ENCODE measurements at regions of chr12 and their contacts with region 1.

Region 1: GRCh38 chr12:62848421-62848820 is 86.5 kb downstream of the PPM1H start:
- DNase-seq: peak; percentile 43
- H3K4me3 Mint-ChIP-seq: peak overlapping the region; percentile 17
- H3K27ac Mint-ChIP-seq: peak overlapping the region; percentile 82
- H3K4me1 Mint-ChIP-seq: peaks cover 44% of the 10 kb centered on the region
- H3K27me3 Mint-ChIP-seq: no peaks in the 10 kb centered on the region
- CTCF ChIP-seq: no peak

Region 2: DNA sequence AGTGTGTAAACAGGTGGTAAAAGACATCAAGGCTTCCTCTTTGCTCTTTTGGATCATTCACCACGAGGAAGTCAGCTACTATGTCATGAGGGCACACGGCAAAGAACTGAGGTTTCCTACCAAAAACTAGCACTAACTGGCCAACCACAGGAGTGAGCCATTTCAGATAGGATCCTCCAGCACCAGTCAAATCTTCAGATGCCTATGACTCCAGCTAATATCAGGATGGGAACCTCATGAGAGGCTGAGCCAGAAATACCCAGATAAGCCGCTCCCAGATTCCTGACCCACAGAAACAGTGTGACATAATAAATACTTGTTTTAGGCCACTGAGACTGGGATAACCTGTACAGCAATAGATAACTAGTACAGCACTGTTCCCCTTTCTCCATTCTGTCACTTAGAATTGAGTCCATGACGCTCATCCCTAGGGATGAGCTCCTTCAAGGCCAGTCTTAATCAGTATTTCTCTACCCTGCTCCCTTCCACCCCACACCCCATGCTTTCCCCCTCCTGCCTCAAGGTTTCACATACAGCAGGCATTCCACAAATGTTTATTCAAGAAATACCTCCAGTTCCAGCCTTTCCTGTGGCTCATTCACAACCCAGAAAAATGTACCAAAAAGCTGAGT is 18.1 kb after region 1 on chr12:
- CTCF ChIA-PET with region 1: interaction called, 10 read pairs
- intact Hi-C with region 1: loop called (anchors 2 kb)
- DNase-seq: peak; percentile 59
- H3K4me3 Mint-ChIP-seq: peak overlapping the region; percentile 22
- H3K27ac Mint-ChIP-seq: peak overlapping the region; percentile 57
- H3K4me1 Mint-ChIP-seq: peaks cover 61% of the 10 kb centered on the region
- H3K27me3 Mint-ChIP-seq: no peaks in the 10 kb centered on the region
- CTCF ChIP-seq: no peak

Region 3: DNA sequence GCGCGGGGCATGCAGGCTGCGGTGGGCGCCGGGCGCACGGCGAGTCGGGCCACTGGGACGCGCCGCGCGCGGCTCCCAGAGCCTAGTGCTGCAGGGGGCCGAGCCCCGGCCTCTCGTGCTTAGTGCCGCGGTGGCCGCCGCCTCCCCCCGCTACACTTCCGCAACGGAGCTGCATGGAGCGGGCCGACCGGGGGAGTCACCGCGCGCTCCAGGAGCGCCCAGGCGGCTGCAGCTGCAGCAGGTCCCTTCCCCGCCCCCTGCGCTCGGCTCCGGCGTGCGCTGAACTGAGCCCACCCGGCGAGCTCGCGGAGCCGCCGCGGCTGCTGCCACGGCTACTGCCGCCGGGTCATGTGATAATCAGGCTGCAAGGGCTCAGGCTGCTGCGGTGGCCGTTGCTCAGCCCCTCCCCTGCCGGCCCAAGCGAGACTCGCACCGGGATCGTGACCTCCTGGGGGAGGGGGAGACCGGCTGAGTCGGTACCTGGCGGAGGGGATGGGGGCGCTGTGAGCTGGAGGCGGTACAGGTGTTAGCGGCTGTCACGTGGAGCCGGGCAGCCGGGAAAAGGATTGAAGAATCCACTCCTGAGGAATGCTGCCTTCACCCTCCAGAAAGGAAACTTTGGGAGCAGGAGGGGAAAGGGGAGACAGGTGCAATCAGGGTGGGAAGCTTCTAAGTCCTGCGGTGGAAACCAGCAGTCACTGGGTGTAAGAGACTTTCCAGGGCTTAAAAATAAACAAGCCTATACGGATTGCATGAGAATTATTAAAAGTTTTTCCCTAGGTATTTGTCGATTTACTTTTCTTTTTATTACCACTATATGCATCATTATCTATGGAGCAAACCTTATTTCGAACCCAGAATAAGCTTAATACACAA is 86.6 kb after region 1 on chr12 and contains the start of gene PPM1H:
- CTCF ChIA-PET with region 1: interaction called, 11 read pairs
- intact Hi-C with region 1: loop called (anchors 5 kb)
- DNase-seq: peak; percentile 99
- H3K4me3 Mint-ChIP-seq: peak within 1 kb of the TSS; percentile 76
- H3K27ac Mint-ChIP-seq: peak within 1 kb of the TSS; percentile 90
- H3K4me1 Mint-ChIP-seq: peaks cover 34% of the 10 kb centered on the region
- H3K27me3 Mint-ChIP-seq: no peaks in the 10 kb centered on the region
- CTCF ChIP-seq: peak; percentile 93
- total RNA-seq, gene PPM1H: 36.7 and 39.1 TPM in 2 replicates

Region 4: GRCh38 chr12:62983599-62984022 is 135.2 kb after region 1 on chr12:
- CTCF ChIA-PET with region 1: interaction called, 7 read pairs
- intact Hi-C with region 1: loop called (anchors 10 kb)
- DNase-seq: peak; percentile 55
- H3K4me3 Mint-ChIP-seq: no peak overlapping the region
- H3K27ac Mint-ChIP-seq: no peak overlapping the region
- H3K4me1 Mint-ChIP-seq: peaks cover 9% of the 10 kb centered on the region
- H3K27me3 Mint-ChIP-seq: no peaks in the 10 kb centered on the region
- CTCF ChIP-seq: peak; percentile 58

Measured in Calu3 (cell line).